Endothelial cell of umbilical vein (primary cell): ENCODE measurements at regions of chr10 and their contacts with region 1.

Region 1: GRCh38 chr10:60964257-60965235 is 20.6 kb upstream of the RHOBTB1 start:
- DNase-seq: peak; percentile 91
- H3K4me3 ChIP-seq: peak overlapping the region in 1 of 3 experiments; percentile 34
- H3K27ac ChIP-seq: peak overlapping the region; percentile 94
- H3K4me1 ChIP-seq: peaks cover 27% of the 10 kb centered on the region
- H3K27me3 ChIP-seq: no peaks in the 10 kb centered on the region
- CTCF ChIP-seq: peak; percentile 67 to 74
- POLR2A ChIP-seq: no peak

Region 2: DNA sequence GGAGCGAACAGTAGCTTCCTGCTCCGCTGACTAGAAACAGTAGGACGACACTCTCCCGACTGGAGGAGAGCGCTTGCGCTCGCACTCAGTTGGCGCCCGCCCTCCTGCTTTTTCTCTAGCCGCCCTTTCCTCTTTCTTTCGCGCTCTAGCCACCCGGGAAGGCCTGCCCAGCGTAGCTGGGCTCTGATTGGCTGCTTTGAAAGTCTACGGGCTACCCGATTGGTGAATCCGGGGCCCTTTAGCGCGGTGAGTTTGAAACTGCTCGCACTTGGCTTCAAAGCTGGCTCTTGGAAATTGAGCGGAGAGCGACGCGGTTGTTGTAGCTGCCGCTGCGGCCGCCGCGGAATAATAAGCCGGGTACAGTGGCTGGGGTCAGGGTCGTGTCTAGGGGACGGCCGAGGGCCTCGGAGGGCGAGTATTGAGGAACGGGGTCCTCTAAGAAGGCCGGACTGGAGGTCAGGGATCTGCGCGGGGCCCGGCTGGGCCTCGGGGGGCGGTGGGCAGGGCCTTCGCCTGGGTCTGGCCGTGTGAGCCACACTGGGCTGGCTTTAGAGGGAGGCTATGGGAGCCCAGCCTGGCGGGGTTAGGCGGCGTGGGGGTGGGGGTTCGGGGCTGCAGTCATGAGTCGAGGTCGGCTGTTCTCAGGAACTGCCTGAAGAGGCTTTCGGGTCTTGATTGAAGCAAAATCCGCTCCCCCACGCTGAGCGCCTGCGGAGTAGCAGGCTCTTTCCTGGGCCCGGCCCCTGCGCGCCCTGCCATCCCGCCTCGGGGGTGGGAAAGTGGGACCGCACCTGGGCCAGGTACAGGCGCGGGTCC is 186.1 kb before region 1 on chr10 and contains the start of gene CDK1:
- CTCF ChIA-PET with region 1: interaction called, 5 read pairs
- POLR2A ChIA-PET with region 1: no interaction called
- dilution Hi-C with region 1: no loop called
- intact Hi-C with region 1: loop called (anchors 1 kb)
- DNase-seq: peak; percentile 98
- H3K4me3 ChIP-seq: peak within 1 kb of the TSS; percentile 91 to 98 (median 92)
- H3K27ac ChIP-seq: peak within 1 kb of the TSS; percentile 64
- H3K4me1 ChIP-seq: peaks cover 37% of the 10 kb centered on the region
- H3K27me3 ChIP-seq: no peaks in the 10 kb centered on the region
- CTCF ChIP-seq: no peak
- POLR2A ChIP-seq: peak; percentile 75
- total RNA-seq, gene CDK1: 70.1 and 71.6 TPM in 2 replicates

Region 3: GRCh38 chr10:60883187-60883586 is 81.4 kb before region 1 on chr10:
- CTCF ChIA-PET with region 1: interaction called, 9 read pairs
- POLR2A ChIA-PET with region 1: no interaction called
- dilution Hi-C with region 1: no loop called
- intact Hi-C with region 1: loop called (anchors 1 kb)
- DNase-seq: peak; percentile 61
- H3K4me3 ChIP-seq: no peak overlapping the region
- H3K27ac ChIP-seq: no peak overlapping the region
- H3K4me1 ChIP-seq: no peaks in the 10 kb centered on the region
- H3K27me3 ChIP-seq: no peaks in the 10 kb centered on the region
- CTCF ChIP-seq: peak; percentile 41 to 64
- POLR2A ChIP-seq: no peak

Region 4: GRCh38 chr10:60978287-60979115 is 14.0 kb after region 1 on chr10:
- CTCF ChIA-PET with region 1: interaction called, 23 read pairs
- POLR2A ChIA-PET with region 1: interaction called, 3 read pairs
- dilution Hi-C with region 1: no loop called
- intact Hi-C with region 1: loop called (anchors 1 kb)
- DNase-seq: peak; percentile 94
- H3K4me3 ChIP-seq: no peak overlapping the region
- H3K27ac ChIP-seq: peak overlapping the region; percentile 89
- H3K4me1 ChIP-seq: peaks cover 41% of the 10 kb centered on the region
- H3K27me3 ChIP-seq: no peaks in the 10 kb centered on the region
- CTCF ChIP-seq: no peak
- POLR2A ChIP-seq: no peak

Region 5: DNA sequence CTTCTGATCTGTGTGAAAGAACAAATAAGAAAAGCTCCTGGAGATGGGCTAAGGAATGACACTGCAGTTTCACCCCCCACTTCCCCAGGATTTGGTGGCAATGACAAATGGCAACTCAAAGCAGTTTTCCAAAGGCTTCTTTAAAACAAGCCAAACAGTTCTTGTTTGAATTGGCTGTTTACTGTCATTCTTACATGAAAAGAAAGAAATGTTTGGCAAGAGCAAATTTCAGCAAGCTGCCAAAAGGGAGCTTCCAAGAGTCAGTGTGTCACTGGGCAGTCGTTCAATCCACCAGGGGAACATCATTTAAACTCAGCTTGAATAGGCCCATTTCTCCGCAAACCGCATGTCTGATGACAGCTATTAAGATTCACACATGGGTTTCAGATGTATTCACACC is 98.5 kb after region 1 on chr10:
- CTCF ChIA-PET with region 1: no interaction called
- POLR2A ChIA-PET with region 1: no interaction called
- dilution Hi-C with region 1: no loop called
- intact Hi-C with region 1: no loop called
- DNase-seq: peak; percentile 16
- H3K4me3 ChIP-seq: no peak overlapping the region
- H3K27ac ChIP-seq: no peak overlapping the region
- H3K4me1 ChIP-seq: peaks cover 13% of the 10 kb centered on the region
- H3K27me3 ChIP-seq: no peaks in the 10 kb centered on the region
- CTCF ChIP-seq: no peak
- POLR2A ChIP-seq: no peak

Region 6: DNA sequence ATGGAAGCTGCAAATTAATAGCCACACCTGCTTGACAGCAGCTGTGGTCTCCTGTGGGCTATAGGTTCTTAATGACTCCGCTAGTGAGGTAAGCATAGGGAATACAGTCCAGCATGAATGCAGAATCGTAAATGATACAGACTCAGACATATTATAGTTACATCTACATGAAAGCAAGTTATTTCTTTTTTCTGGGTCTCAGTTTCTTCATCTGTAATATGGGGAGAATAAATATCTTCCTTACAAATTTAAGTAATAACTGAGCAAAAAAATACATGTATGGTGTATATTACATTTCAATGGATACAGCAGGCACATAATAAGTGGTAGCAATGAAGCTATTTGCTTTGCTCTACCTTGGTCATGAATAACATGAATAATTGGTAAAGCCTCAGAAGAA is 225.4 kb after region 1 on chr10:
- CTCF ChIA-PET with region 1: interaction called, 12 read pairs
- POLR2A ChIA-PET with region 1: no interaction called
- dilution Hi-C with region 1: no loop called
- intact Hi-C with region 1: loop called (anchors 1 kb)
- DNase-seq: no peak
- H3K4me3 ChIP-seq: no peak overlapping the region
- H3K27ac ChIP-seq: no peak overlapping the region
- H3K4me1 ChIP-seq: no peaks in the 10 kb centered on the region
- H3K27me3 ChIP-seq: no peaks in the 10 kb centered on the region
- CTCF ChIP-seq: no peak
- POLR2A ChIP-seq: no peak

Region 7: DNA sequence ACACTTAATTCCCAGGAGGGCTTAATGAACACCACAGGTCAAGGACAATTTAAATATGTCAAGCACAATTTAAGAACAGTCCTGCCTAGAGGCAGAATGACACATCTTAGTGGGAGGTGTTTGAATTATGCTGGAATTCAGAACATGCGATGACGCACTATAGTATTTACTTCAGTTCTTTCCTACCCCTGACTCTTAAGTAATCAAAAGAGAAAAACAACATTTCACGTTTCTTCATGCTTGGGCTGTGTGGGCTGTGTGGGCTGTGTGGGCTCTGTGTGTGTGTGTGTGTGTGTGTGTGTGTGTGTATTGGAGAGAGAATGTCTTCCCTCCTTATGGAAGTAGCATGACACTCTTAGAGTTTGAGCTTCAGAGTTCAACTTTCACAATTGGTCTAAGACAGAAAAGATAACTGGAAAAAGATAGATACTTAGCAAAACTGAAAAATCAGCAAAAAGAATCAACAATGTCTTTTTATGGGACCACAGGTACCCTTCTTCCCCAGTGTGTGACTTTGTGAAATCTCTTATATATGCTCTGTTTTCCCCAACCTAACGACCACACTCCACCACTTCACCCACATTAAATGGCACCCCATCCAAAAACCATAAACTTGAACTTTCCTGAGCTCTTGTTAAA is 664.4 kb after region 1 on chr10:
- CTCF ChIA-PET with region 1: no interaction called
- POLR2A ChIA-PET with region 1: no interaction called
- dilution Hi-C with region 1: no loop called
- intact Hi-C with region 1: loop called (anchors 10 kb)
- DNase-seq: peak; percentile 55
- H3K4me3 ChIP-seq: no peak overlapping the region
- H3K27ac ChIP-seq: peak overlapping the region; percentile 22
- H3K4me1 ChIP-seq: peaks cover 18% of the 10 kb centered on the region
- H3K27me3 ChIP-seq: no peaks in the 10 kb centered on the region
- CTCF ChIP-seq: no peak
- POLR2A ChIP-seq: no peak

Region 8: DNA sequence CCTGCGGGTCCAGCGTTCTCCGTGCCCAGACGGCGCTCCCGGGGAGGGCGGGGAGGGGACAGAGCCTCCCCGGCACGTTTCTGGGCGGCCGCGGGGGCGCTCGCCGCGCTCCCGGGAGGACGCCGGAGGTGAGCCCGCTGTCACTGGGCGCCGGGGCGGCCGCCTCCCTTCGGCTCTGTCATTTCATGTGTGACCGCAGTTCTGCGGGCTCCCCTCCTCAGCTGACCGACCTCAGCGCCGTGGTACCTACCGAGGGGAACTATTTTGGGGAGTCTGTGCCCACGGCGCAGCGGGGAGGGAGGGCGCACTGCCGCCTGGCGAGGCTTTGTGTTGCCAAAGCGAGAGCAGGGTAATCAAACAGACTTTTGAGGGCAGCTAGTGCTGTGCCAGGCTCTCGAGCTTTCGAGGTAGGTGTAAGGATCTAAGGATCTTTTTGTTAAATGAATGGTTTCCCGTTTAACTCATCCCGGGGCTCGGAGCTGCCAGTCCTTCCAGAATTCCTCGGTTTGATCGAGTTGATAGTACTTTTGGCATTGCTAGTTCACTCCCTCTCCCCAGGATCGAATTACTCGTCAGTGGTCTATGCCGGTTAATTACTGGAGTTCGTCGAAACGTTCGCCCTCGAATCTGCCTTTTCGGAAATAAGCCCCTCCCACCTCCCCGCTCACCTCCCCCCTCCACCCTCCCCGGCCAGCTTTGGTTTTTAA is 938.8 kb after region 1 on chr10:
- CTCF ChIA-PET with region 1: no interaction called
- POLR2A ChIA-PET with region 1: no interaction called
- dilution Hi-C with region 1: no loop called
- intact Hi-C with region 1: loop called (anchors 5 kb)
- DNase-seq: no peak
- H3K4me3 ChIP-seq: peak overlapping the region; percentile 26 to 79 (median 65)
- H3K27ac ChIP-seq: peak overlapping the region; percentile 59
- H3K4me1 ChIP-seq: peaks cover 28% of the 10 kb centered on the region
- H3K27me3 ChIP-seq: no peaks in the 10 kb centered on the region
- CTCF ChIP-seq: peak; percentile 5 to 18
- POLR2A ChIP-seq: no peak